Left cardiac atrium (tissue), 4 donors: ENCODE measurements at regions of chr18 and their contacts with region 1.

Region 1: DNA sequence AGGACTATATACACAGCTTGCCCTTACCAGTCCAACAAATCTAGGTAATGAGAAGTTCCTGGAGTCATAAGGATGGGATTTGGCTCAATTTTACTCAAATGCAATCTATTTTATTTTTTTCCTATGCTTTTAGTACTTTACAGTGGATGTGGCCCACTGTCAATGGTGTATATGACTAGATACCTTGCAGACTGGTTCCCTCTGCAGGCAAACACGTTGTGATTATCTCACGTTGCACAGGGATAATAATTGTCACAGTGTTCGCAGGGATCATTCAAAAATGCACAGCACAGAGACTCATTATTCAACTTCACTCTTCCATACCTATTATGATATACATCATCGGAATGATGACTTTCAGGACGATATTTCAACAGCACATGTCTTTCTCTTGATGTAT is 359.7 kb downstream of the MBD2 start:
- DNase-seq: no peak
- ATAC-seq: no peak

Region 2: GRCh38 chr18:53886058-53886457 is 21.3 kb after region 1 on chr18:
- intact Hi-C with region 1: no loop called
- DNase-seq: no peak
- ATAC-seq: no peak

Region 3: GRCh38 chr18:53920312-53921075 is 55.7 kb after region 1 on chr18:
- intact Hi-C with region 1: loop called in 1 of 2 experiments (anchors 10 kb)
- DNase-seq: no peak
- ATAC-seq: no peak